PC-9 (cell line): ENCODE measurements at regions of chr3 and their contacts with region 1.

Region 1: DNA sequence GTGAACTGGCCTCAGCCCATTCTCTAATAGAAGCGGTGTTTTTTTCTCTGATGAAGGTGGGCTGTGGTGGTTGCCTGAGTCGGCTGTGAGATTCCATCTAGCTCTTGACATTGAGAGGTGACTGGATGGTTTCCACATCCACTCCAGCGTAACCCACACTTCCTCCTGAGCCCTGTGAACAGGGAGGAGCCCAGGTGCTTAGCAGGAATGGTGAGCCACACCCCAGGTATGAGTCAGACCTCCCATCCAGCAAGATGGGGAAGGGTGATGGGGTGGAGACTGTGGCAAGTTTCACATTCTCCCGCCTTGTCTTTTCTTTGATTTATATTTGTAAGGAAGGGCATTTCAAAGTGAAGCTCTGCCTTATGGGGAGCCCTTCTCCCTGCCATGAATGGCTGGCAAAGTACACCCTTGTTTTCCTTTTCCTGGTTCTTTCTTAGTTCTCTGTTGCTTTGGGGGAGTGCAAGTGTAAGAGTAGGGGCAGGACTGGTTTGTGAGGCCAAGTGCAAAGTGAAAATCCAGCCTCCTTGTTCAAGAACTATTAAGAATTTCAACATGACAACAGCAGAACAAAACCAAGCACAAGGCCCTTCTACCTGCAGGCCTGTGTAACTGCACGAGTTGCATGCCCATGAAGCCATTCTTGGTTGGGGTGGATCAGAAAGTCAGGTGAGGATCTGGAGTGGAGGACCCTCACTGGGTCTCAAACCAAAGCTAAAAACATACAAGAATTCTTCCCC is 4.6 kb upstream of the TPRG1 start:
- DNase-seq: peak; percentile 89 to 94
- H3K4me3 ChIP-seq: no peak overlapping the region
- H3K27ac ChIP-seq: 0 out of 2 replicates have a peak overlapping the region, but pooled peaks have one; percentile 17
- H3K4me1 ChIP-seq: peaks cover 14% of the 10 kb centered on the region
- H3K27me3 ChIP-seq: no peaks in the 10 kb centered on the region
- CTCF ChIP-seq: no peak

Region 2: GRCh38 chr3:188270423-188270972 is 896.7 kb before region 1 on chr3:
- CTCF ChIA-PET with region 1: no interaction called
- POLR2A ChIA-PET with region 1: no interaction called
- intact Hi-C with region 1: no loop called
- DNase-seq: peak; percentile 80 to 87
- H3K4me3 ChIP-seq: no peak overlapping the region
- H3K27ac ChIP-seq: no peak overlapping the region
- H3K4me1 ChIP-seq: peaks cover 43% of the 10 kb centered on the region
- H3K27me3 ChIP-seq: no peaks in the 10 kb centered on the region
- CTCF ChIP-seq: no peak

Region 3: DNA sequence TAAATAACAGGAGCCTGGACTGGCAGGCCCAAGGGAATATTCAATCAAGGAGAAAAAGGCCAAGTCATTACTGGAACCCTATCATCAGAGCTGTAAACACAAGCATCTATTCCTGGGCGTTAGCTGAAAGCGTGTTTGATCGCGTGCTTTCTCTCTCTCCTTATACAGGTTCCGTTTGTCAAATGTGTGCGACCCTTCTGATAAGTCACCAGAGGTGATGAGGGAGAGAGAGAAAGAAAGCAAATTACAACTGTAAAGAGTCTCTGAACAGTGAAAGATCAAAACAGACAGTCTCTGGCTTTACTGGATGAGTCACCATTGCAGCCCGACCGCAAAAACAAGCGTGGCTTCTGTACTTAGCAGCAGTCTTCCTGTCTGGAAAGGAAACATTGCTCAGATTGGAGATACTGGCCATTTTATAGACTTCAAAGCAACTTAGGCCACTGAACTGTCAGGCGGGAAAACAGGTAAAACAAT is 34.9 kb before region 1 on chr3:
- CTCF ChIA-PET with region 1: no interaction called
- POLR2A ChIA-PET with region 1: no interaction called
- intact Hi-C with region 1: loop called (anchors 1 kb)
- DNase-seq: peak; percentile 69 to 78
- H3K4me3 ChIP-seq: no peak overlapping the region
- H3K27ac ChIP-seq: 0 out of 2 replicates have a peak overlapping the region, but pooled peaks have one; percentile 2
- H3K4me1 ChIP-seq: peaks cover 14% of the 10 kb centered on the region
- H3K27me3 ChIP-seq: no peaks in the 10 kb centered on the region
- CTCF ChIP-seq: no peak

Region 4: DNA sequence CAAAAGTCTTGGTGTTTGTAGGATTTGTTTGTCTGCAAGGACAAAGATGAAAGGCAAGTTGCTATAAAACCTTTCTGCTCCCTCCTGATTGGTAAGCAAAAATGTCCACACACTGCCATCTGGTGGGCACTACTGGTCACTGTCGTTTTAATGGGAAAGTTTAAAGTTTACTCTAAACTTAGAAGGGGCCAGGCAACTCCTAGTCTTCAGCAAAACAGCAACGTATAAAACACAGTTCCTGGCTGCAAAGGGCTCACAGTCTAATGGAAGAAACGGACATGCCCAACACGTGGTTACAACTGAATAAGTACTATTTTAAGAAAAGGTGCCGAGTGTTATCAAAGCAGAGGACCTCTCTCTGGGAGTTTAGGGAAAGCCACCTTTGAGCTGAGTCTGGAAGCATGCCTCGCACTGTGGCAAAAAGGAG is 19.1 kb before region 1 on chr3:
- CTCF ChIA-PET with region 1: no interaction called
- POLR2A ChIA-PET with region 1: no interaction called
- intact Hi-C with region 1: no loop called
- DNase-seq: peak; percentile 59
- H3K4me3 ChIP-seq: no peak overlapping the region
- H3K27ac ChIP-seq: no peak overlapping the region
- H3K4me1 ChIP-seq: peaks cover 7% of the 10 kb centered on the region
- H3K27me3 ChIP-seq: no peaks in the 10 kb centered on the region
- CTCF ChIP-seq: peak; percentile 97

Region 5: GRCh38 chr3:189304446-189305351 is 137.5 kb after region 1 on chr3:
- CTCF ChIA-PET with region 1: no interaction called
- POLR2A ChIA-PET with region 1: no interaction called
- intact Hi-C with region 1: loop called (anchors 2 kb)
- DNase-seq: peak; percentile 93 to 99
- H3K4me3 ChIP-seq: peak overlapping the region; percentile 27; the same call in 1 of the 2 replicates
- H3K27ac ChIP-seq: peak overlapping the region; percentile 85
- H3K4me1 ChIP-seq: peaks cover 44% of the 10 kb centered on the region
- H3K27me3 ChIP-seq: no peaks in the 10 kb centered on the region
- CTCF ChIP-seq: no peak